ENCODE measurements at regions of chr5 and their contacts with region 1.

Region 1: GRCh38 chr5:75331095-75332090 is 5.6 kb upstream of the HMGCR start:
- DNase-seq: no peak
- ATAC-seq: no peak
- H3K4me3 ChIP-seq: no peak overlapping the region
- H3K27ac ChIP-seq: no peak overlapping the region
- H3K4me1 ChIP-seq: no peaks in the 10 kb centered on the region
- H3K27me3 ChIP-seq: no peaks in the 10 kb centered on the region
- CTCF ChIP-seq: peak in 2 of 3 experiments; percentile 23 to 28; a peak in 2 of 6 replicates
- EP300 ChIP-seq: no peak
- POLR2A ChIP-seq: no peak
- RAD21 ChIP-seq: no peak

Region 2: GRCh38 chr5:75320341-75320740 is 11.1 kb before region 1 on chr5:
- CTCF ChIA-PET with region 1: interaction called, 3 read pairs
- POLR2A ChIA-PET with region 1: no interaction called
- RAD21 ChIA-PET with region 1: no interaction called
- SMC1A ChIA-PET with region 1: interaction called, 11 read pairs
- in situ Hi-C with region 1: no loop called
- intact Hi-C with region 1: no loop called
- DNase-seq: no peak
- ATAC-seq: no peak
- H3K4me3 ChIP-seq: no peak overlapping the region
- H3K27ac ChIP-seq: no peak overlapping the region
- H3K4me1 ChIP-seq: no peaks in the 10 kb centered on the region
- H3K27me3 ChIP-seq: no peaks in the 10 kb centered on the region
- CTCF ChIP-seq: no peak
- EP300 ChIP-seq: no peak
- POLR2A ChIP-seq: no peak
- RAD21 ChIP-seq: no peak